ENCODE measurements at regions of chr7 and their contacts with region 1.

Region 1: GRCh38 chr7:46764100-46764936 is 817.6 kb downstream of the TNS3 start:
- DNase-seq: peak; percentile 98

Region 2: DNA sequence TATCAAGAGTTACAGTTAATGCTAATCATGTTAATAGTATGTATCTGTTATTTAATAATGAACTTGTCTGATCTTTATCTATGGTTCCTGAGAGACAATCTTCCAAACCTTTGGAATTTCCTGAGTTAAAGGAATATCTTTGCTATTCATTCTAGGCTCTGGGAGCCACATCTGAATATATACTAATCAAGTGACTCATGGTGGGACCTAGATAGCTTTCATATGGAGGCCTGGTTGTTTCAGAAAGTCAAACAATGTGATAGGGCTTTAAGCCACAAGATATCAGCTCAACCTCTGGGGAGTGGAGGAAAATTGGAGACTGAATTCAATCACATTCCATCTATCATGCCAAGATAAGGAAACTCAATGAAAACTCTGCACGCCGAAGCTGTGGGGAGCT is 71.2 kb after region 1 on chr7:
- in situ Hi-C with region 1: no loop called
- DNase-seq: peak; percentile 15

Region 3: GRCh38 chr7:47088329-47089067 is 324.2 kb after region 1 on chr7:
- in situ Hi-C with region 1: loop called (anchors 25 kb)
- DNase-seq: peak; percentile 81